ENCODE measurements at regions of chr13 and their contacts with region 1.

Region 1: DNA sequence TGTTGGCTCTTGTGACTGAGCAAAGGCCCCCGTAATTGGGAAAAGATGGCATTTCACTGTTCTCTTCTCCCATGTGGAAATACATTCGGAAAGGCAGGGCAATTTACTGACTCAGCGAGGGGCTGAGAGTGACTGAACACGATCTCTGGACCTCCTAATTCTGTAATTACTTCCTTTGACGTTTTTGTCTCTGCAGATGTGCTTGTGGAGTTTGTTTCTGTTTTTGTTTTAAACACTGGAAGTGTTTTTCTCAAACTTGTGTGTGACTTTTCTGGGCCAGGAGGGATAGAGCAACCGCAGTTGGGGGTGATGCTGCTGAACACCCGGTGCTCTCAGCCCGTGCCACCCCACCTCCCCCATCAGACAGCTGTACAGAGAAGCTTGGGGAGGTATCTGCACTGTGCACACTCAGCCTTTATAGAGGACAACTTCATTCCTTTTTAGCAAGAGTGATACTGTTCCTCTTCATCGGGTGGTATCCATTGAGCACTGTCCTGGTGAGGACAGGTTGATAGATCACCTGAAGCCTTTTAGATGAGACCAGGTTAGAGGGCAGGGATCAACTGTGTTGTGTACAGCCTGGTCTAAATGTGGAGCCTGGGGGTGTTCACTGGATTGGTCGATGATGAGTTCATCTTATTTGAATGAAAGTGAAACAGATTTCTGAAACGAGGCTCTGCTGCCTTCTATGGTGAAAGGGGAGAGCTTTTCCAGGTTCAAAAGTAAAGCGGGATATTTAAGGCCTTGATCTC is 117.4 kb downstream of the ESD start:
- DNase-seq: peak; percentile 45
- H3K4me3 Mint-ChIP-seq: no peak overlapping the region
- H3K27ac Mint-ChIP-seq: no peak overlapping the region
- H3K4me1 Mint-ChIP-seq: peaks cover 16% of the 10 kb centered on the region
- H3K27me3 Mint-ChIP-seq: no peaks in the 10 kb centered on the region

Region 2: DNA sequence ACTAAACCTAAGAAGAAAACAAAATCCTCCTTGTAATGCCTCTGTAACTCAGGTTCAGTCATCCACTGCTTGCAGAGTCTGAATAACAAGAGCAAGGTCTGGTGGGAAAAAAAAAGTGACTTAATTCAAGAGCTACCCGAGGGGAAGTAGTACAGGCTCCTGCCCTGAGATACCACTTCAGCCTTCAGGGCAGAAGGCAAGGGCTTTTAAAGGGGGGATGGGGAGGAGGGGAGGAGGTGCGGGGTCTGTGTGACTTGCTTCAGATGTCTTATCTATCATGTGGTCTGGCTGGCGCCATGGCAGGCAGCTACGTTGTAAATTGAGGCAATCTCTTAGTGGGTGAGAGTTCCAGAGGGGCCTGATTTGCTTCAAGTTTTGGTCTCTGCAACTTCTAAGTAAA is 401.1 kb before region 1 on chr13:
- CTCF ChIA-PET with region 1: no interaction called
- intact Hi-C with region 1: no loop called
- DNase-seq: no peak
- H3K4me3 Mint-ChIP-seq: no peak overlapping the region
- H3K27ac Mint-ChIP-seq: no peak overlapping the region
- H3K4me1 Mint-ChIP-seq: no peaks in the 10 kb centered on the region
- H3K27me3 Mint-ChIP-seq: no peaks in the 10 kb centered on the region

Region 3: DNA sequence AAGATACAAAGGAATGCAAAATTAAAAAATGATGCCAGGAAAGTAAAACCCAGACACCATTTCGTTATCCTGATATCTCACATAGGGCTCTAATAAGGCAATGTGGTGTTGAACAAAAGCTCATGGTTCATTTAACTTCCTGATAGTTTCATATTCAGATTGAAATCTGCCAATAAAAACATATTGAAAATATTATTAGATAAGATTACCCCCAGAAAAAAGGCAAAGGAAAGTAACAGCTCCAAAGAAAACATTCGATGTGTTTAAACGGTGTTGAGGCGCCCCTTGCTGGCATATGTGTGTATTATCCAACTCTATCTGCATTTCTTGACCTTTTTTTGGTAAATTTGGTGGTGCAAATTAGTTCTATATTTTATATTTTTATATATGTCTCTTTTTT is 41.5 kb after region 1 on chr13:
- CTCF ChIA-PET with region 1: no interaction called
- intact Hi-C with region 1: loop called (anchors 5 kb)
- DNase-seq: peak; percentile 67
- H3K4me3 Mint-ChIP-seq: no peak overlapping the region
- H3K27ac Mint-ChIP-seq: no peak overlapping the region
- H3K4me1 Mint-ChIP-seq: no peaks in the 10 kb centered on the region
- H3K27me3 Mint-ChIP-seq: no peaks in the 10 kb centered on the region

Region 4: GRCh38 chr13:46850214-46850613 is 170.7 kb after region 1 on chr13:
- CTCF ChIA-PET with region 1: no interaction called
- intact Hi-C with region 1: no loop called
- DNase-seq: no peak
- H3K4me3 Mint-ChIP-seq: no peak overlapping the region
- H3K27ac Mint-ChIP-seq: no peak overlapping the region
- H3K4me1 Mint-ChIP-seq: no peaks in the 10 kb centered on the region
- H3K27me3 Mint-ChIP-seq: peaks cover 4% of the 10 kb centered on the region